Mammary epithelial cell (primary cell): ENCODE measurements at regions of chr9 and their contacts with region 1.

Region 1: DNA sequence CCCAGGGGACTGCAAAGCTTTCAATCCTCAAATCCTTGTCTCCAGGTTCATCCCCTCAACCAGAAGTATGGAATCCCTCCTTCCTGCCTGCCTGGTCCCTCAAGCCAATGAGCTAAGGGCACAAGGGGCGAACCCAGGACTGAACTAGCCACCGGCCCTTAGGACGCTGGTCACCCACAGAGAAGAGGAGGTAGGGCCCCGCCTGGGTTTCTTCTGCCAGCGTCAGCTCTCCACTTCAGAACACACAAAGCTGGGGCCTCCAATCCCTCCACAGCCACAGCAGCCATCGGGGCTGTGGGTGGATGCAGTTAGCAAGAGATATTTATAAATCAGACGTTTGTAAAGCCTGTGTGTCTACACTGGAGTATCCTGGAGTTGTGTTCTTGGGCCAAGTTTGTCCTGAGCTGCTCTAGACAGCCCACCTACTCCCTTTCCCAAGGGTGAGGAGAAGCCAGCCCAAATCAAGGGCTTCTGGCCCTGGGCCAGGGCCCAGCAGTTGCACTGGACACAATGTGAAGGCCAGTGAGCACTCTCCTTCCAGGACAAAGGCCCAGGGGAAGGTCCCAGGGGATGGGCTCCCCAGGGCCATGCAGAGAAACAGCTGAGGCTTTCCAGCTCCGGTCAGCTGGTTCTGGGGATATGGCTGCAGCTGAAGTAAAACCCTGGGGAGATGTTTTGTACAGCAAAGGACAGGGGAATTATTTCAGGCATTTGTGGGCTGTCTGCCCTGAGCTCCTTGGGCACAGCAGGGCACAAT is 18.9 kb downstream of the AMBP start:
- DNase-seq: no peak
- H3K4me3 ChIP-seq: no peak overlapping the region
- H3K27ac ChIP-seq: no peak overlapping the region
- H3K4me1 ChIP-seq: no peaks in the 10 kb centered on the region
- H3K27me3 ChIP-seq: no peaks in the 10 kb centered on the region
- CTCF ChIP-seq: no peak

Region 2: DNA sequence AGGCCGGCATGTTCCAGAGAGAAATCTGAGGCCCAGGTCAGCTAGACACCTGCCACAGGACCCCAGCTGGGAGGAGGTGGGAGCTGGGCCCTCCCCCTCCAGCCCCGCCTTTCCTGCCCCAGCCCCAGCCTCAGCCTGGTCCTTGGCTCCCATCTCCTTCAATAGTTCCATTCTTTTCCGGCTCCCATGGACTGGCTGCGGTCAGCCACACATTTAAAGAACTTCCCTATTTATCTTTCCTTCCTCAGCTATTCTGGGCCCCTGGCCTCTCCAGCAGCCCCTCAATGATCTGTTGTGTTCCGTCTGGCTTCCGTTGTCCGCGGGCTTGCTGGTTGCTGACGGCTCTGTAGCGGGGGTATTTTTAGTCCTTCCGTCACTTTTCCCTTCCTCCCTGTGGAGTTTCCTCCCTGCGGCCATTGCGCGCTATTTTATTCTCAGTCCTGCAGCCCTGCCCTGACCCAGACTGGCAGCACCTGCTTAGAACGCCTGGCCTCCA is 55.0 kb before region 1 on chr9:
- CTCF ChIA-PET with region 1: no interaction called
- dilution Hi-C with region 1: loop called (anchors 5 kb)
- in situ Hi-C with region 1: no loop called
- intact Hi-C with region 1: no loop called
- DNase-seq: no peak
- H3K4me3 ChIP-seq: no peak overlapping the region
- H3K27ac ChIP-seq: no peak overlapping the region
- H3K4me1 ChIP-seq: no peaks in the 10 kb centered on the region
- H3K27me3 ChIP-seq: no peaks in the 10 kb centered on the region
- CTCF ChIP-seq: no peak